PC-3 (cell line): ENCODE measurements at regions of chr9 and their contacts with region 1.

Region 1: DNA sequence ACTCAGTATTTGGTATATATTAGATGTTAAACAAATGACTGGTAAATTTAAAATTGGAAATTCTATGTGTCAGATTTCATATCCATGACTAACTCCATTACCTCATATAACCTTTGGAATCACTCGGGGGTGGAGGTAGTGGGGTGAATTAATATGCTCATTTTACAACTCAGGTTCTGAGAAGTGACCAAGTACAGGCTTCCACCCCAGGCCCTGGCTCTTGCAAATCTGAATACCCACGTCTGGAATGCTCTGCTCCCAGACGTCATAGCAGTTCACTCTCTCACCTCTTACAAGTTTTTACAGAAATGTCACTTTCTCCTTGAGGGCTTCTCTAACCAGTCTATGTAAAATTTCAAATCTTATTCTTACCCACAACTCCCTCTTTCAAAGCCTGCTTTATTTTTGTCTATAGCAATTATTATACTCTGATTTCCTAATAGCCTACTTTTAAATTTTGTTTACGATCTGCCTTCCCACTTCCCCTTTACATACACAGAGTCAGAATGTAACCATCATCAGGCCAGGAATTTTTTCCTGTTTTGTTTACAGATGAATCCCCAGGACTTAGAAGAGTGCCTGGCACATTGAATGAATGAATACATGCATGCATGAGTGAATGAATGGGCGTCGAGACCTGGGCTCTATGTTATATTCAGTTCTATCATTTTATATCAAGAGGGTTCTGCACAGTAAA is 134.1 kb upstream of the IFNE start:
- DNase-seq: peak; percentile 83
- ATAC-seq: peak; percentile 87
- H3K4me3 ChIP-seq: peak overlapping the region; percentile 35; the same call in 1 of the 2 replicates
- H3K27ac ChIP-seq: peak overlapping the region; percentile 90
- H3K4me1 ChIP-seq: peaks cover 47% of the 10 kb centered on the region
- H3K27me3 ChIP-seq: no peaks in the 10 kb centered on the region
- CTCF ChIP-seq: no peak

Region 2: DNA sequence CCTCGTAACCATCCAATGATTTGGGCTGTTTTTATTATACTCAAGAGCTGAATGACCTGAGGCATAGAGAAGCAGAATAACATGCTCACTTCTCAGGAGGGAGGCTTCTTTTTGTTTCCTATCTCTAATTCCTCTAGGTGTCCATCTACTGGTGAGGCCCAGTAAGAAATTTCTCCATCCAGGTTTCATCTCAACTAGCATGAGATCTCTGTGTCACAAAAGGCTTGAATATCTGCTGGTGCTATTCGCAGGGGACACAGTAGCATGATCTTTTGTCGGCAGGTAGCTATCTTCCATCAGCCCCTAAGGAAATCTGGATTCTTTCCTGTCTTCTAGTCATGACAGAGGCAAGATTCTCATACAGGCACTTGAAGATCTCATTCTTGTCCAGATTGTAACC is 143.0 kb before region 1 on chr9:
- CTCF ChIA-PET with region 1: no interaction called
- POLR2A ChIA-PET with region 1: no interaction called
- intact Hi-C with region 1: no loop called
- DNase-seq: no peak
- ATAC-seq: no peak
- H3K4me3 ChIP-seq: no peak overlapping the region
- H3K27ac ChIP-seq: no peak overlapping the region
- H3K4me1 ChIP-seq: no peaks in the 10 kb centered on the region
- H3K27me3 ChIP-seq: no peaks in the 10 kb centered on the region
- CTCF ChIP-seq: peak; percentile 35; the same call in 1 of the 2 replicates

Region 3: DNA sequence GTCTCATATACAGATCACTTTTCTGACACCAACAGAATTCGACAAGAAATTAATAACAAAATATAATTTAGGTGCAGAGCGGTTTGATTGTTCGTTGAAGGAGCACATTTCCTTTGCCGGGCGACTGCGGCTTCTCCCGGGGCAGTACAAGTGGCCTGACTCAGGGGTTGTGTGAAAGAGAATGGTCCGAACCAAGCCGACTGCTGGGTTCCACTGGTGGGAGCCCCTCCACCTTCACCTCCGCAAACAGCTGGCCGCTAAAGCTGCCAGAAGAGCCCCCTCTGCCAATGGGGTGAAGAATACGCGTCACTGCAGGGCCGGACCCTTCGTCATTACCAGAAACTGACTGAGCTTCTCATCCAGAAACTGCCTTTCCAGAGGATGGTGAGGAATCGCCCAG is 21.9 kb after region 1 on chr9:
- CTCF ChIA-PET with region 1: no interaction called
- POLR2A ChIA-PET with region 1: no interaction called
- intact Hi-C with region 1: loop called (anchors 2 kb)
- DNase-seq: no peak
- ATAC-seq: no peak
- H3K4me3 ChIP-seq: no peak overlapping the region
- H3K27ac ChIP-seq: no peak overlapping the region
- H3K4me1 ChIP-seq: no peaks in the 10 kb centered on the region
- H3K27me3 ChIP-seq: no peaks in the 10 kb centered on the region
- CTCF ChIP-seq: no peak